Endothelial cell of umbilical vein (primary cell): ENCODE measurements at regions of chr7 and their contacts with region 1.

Region 1: GRCh38 chr7:41189866-41190265 is 513.0 kb downstream of the INHBA start:
- DNase-seq: peak; percentile 97
- H3K4me3 ChIP-seq: no peak overlapping the region
- H3K27ac ChIP-seq: peak overlapping the region; percentile 100
- H3K4me1 ChIP-seq: peaks cover 42% of the 10 kb centered on the region
- H3K27me3 ChIP-seq: no peaks in the 10 kb centered on the region
- CTCF ChIP-seq: no peak
- POLR2A ChIP-seq: peak; percentile 62

Region 2: GRCh38 chr7:39667341-39667923 is 1522.4 kb before region 1 on chr7:
- CTCF ChIA-PET with region 1: no interaction called
- POLR2A ChIA-PET with region 1: no interaction called
- dilution Hi-C with region 1: no loop called
- intact Hi-C with region 1: no loop called
- DNase-seq: no peak
- H3K4me3 ChIP-seq: no peak overlapping the region
- H3K27ac ChIP-seq: no peak overlapping the region
- H3K4me1 ChIP-seq: peaks cover 17% of the 10 kb centered on the region
- H3K27me3 ChIP-seq: no peaks in the 10 kb centered on the region
- CTCF ChIP-seq: no peak
- POLR2A ChIP-seq: no peak

Region 3: DNA sequence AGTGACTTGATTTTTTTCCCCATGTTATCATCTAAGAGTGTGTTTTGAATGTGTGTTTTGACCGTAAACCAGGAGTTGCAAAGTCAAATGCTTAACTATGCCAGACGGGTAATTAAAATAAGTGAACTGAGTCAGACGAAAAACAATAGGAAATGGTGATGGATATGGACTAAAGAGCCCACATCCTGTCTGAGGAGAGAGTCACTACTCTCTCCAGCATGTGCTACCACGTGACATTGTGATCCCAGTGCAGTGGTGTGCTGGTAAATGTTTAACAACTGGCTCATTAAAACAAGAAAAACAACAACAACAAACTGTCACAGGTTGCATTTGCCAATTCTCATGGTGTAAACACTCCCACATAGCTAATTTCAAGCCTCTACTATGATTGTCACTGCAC is 890.8 kb before region 1 on chr7:
- CTCF ChIA-PET with region 1: no interaction called
- POLR2A ChIA-PET with region 1: no interaction called
- dilution Hi-C with region 1: no loop called
- intact Hi-C with region 1: loop called (anchors 1 kb)
- DNase-seq: peak; percentile 97
- H3K4me3 ChIP-seq: no peak overlapping the region
- H3K27ac ChIP-seq: peak overlapping the region; percentile 98
- H3K4me1 ChIP-seq: peaks cover 48% of the 10 kb centered on the region
- H3K27me3 ChIP-seq: no peaks in the 10 kb centered on the region
- CTCF ChIP-seq: no peak
- POLR2A ChIP-seq: no peak

Region 4: GRCh38 chr7:40403703-40404476 is 786.0 kb before region 1 on chr7:
- CTCF ChIA-PET with region 1: no interaction called
- POLR2A ChIA-PET with region 1: no interaction called
- dilution Hi-C with region 1: no loop called
- intact Hi-C with region 1: no loop called
- DNase-seq: no peak
- H3K4me3 ChIP-seq: no peak overlapping the region
- H3K27ac ChIP-seq: no peak overlapping the region
- H3K4me1 ChIP-seq: peaks cover 6% of the 10 kb centered on the region
- H3K27me3 ChIP-seq: no peaks in the 10 kb centered on the region
- CTCF ChIP-seq: no peak
- POLR2A ChIP-seq: no peak

Region 5: DNA sequence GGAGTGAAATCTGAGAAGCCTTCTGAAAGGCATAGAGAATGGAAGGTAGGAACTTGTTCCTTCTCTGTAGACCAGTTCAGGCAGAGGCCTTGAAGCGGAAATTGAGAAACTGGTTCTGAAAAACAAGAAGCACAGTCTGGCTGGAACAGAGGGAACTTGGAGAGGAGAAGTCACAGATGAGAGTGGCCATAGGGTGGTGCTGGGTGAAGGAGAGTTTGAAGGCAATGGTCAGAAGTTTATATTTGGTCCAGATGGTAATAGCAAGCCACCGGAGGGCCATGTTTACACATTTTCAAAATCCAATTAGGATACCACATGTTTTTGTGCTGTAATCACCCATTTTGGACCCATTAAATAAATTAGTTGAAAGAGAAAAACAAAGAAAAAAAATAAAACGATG is 179.4 kb before region 1 on chr7:
- CTCF ChIA-PET with region 1: interaction called, 4 read pairs
- POLR2A ChIA-PET with region 1: no interaction called
- dilution Hi-C with region 1: no loop called
- intact Hi-C with region 1: loop called (anchors 1 kb)
- DNase-seq: peak; percentile 12
- H3K4me3 ChIP-seq: no peak overlapping the region
- H3K27ac ChIP-seq: peak overlapping the region; percentile 14
- H3K4me1 ChIP-seq: peaks cover 8% of the 10 kb centered on the region
- H3K27me3 ChIP-seq: no peaks in the 10 kb centered on the region
- CTCF ChIP-seq: no peak
- POLR2A ChIP-seq: no peak

Region 6: DNA sequence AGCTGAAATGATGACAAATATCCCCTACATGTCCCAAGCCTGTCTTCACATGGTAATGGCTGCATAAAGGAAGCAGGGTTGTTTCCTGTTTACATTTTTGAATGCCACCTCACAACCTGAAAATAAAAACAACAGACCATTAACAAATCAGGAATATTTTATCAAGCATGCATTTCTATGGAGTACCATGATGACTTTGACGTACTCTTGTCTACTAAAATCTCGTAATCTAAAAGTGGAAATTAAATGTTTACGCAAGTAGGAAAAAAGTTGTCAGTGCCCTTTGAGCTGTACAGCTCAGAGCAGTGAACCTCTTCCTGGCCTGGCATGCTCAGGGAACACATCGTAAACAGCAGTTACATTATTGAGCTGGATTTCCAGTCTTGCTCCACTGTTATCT is 318.9 kb after region 1 on chr7:
- CTCF ChIA-PET with region 1: interaction called, 3 read pairs
- POLR2A ChIA-PET with region 1: no interaction called
- dilution Hi-C with region 1: no loop called
- intact Hi-C with region 1: loop called (anchors 1 kb)
- DNase-seq: peak; percentile 72
- H3K4me3 ChIP-seq: no peak overlapping the region
- H3K27ac ChIP-seq: peak overlapping the region; percentile 46
- H3K4me1 ChIP-seq: peaks cover 13% of the 10 kb centered on the region
- H3K27me3 ChIP-seq: no peaks in the 10 kb centered on the region
- CTCF ChIP-seq: no peak
- POLR2A ChIP-seq: no peak

Region 7: DNA sequence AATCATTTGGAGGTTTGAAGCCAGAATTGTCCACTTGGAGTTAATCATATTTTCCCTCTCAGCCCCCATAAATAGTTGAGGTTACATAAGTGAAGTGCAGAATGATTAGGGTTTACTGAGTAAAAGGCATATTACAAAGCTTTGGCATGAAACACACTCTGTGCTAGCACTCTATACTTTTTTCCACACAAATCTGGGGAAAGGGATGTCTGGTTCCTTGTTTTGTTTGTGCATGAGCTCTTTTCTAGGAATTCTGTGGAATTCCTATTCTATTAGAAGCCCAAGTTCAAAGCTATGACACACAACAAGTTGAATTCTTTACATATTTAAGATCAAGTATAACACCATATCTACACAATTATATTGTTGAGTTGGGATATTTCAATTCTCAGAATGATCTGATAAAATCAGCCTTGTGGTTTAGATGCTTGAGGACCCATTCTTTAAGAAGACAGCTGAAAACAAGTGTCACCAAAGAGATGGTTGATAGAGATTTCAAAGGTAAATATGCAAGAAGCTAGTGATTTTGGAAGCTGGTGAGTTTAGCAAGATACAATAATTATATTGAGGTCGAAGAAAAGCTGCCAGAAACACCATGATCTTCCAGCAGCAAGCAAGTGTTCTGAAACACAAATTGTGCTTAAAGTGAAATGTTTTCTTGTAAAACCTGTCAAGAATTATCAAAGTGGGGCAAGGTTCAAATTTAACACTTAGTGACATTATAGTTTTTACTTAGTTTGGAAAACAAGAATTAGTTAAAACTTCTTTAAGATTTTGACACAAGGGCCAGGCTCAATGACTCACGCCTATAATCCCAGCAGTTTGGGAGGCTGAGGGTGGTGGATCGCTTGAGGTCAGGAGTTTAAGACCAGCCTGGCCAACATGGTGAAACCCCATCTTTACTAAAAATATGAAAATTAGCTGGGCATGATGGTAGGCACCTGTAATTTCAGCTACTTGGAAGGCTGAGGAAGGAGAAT is 390.4 kb after region 1 on chr7:
- CTCF ChIA-PET with region 1: interaction called, 12 read pairs
- POLR2A ChIA-PET with region 1: interaction called, 5 read pairs
- dilution Hi-C with region 1: no loop called
- intact Hi-C with region 1: loop called (anchors 1 kb)
- DNase-seq: peak; percentile 95
- H3K4me3 ChIP-seq: no peak overlapping the region
- H3K27ac ChIP-seq: peak overlapping the region; percentile 93
- H3K4me1 ChIP-seq: peaks cover 43% of the 10 kb centered on the region
- H3K27me3 ChIP-seq: no peaks in the 10 kb centered on the region
- CTCF ChIP-seq: no peak
- POLR2A ChIP-seq: no peak